ENCODE measurements at regions of chr10 and their contacts with region 1.

Region 1: GRCh38 chr10:96089670-96090462 is 40.2 kb upstream of the ZNF518A start:
- DNase-seq: peak; percentile 74 to 78
- H3K4me3 ChIP-seq: peak overlapping the region; percentile 93
- H3K27ac ChIP-seq: peak overlapping the region; percentile 87
- H3K4me1 ChIP-seq: no peaks in the 10 kb centered on the region
- H3K27me3 ChIP-seq: 0 out of 2 replicates have a peak, but pooled peaks cover 11% of the 10 kb centered on the region
- CTCF ChIP-seq: no peak

Region 2: GRCh38 chr10:96038476-96039387 is 51.1 kb before region 1 on chr10:
- CTCF ChIA-PET with region 1: no interaction called
- POLR2A ChIA-PET with region 1: no interaction called
- intact Hi-C with region 1: no loop called
- DNase-seq: no peak
- H3K4me3 ChIP-seq: no peak overlapping the region
- H3K27ac ChIP-seq: no peak overlapping the region
- H3K4me1 ChIP-seq: no peaks in the 10 kb centered on the region
- H3K27me3 ChIP-seq: no peaks in the 10 kb centered on the region
- CTCF ChIP-seq: no peak

Region 3: GRCh38 chr10:96053985-96054384 is 35.9 kb before region 1 on chr10:
- CTCF ChIA-PET with region 1: no interaction called
- POLR2A ChIA-PET with region 1: interaction called, 14 read pairs
- intact Hi-C with region 1: no loop called
- DNase-seq: no peak
- H3K4me3 ChIP-seq: no peak overlapping the region
- H3K27ac ChIP-seq: no peak overlapping the region
- H3K4me1 ChIP-seq: no peaks in the 10 kb centered on the region
- H3K27me3 ChIP-seq: no peaks in the 10 kb centered on the region
- CTCF ChIP-seq: no peak

Measured in PC-9 (cell line).